Activated CD4-positive, alpha-beta memory T cell treated with anti-CD3 and anti-CD28 coated beads for 36 hours (primary cell): ENCODE measurements at regions of chr9 and their contacts with region 1.

Region 1: GRCh38 chr9:72364679-72365524 is at the start of gene ZFAND5:
- DNase-seq: peak; percentile 95
- H3K4me3 Mint-ChIP-seq: peak within 1 kb of the TSS; percentile 84
- H3K27ac Mint-ChIP-seq: peak within 1 kb of the TSS; percentile 96
- H3K4me1 Mint-ChIP-seq: peaks cover 35% of the 10 kb centered on the region
- H3K27me3 Mint-ChIP-seq: no peaks in the 10 kb centered on the region
- total RNA-seq, gene ZFAND5: 92.4 to 93.8 TPM

Region 2: GRCh38 chr9:71783120-71783530 is 581.8 kb before region 1 on chr9:
- CTCF ChIA-PET with region 1: no interaction called
- POLR2A ChIA-PET with region 1: interaction called, 3 read pairs
- intact Hi-C with region 1: loop called (anchors 5 kb)
- DNase-seq: peak; percentile 94
- H3K4me3 Mint-ChIP-seq: peak overlapping the region; percentile 71
- H3K27ac Mint-ChIP-seq: peak overlapping the region; percentile 96
- H3K4me1 Mint-ChIP-seq: peaks cover 43% of the 10 kb centered on the region
- H3K27me3 Mint-ChIP-seq: no peaks in the 10 kb centered on the region

Region 3: GRCh38 chr9:72089451-72090130 is 275.3 kb before region 1 on chr9:
- CTCF ChIA-PET with region 1: no interaction called
- POLR2A ChIA-PET with region 1: no interaction called
- intact Hi-C with region 1: no loop called
- DNase-seq: no peak
- H3K4me3 Mint-ChIP-seq: no peak overlapping the region
- H3K27ac Mint-ChIP-seq: no peak overlapping the region
- H3K4me1 Mint-ChIP-seq: no peaks in the 10 kb centered on the region
- H3K27me3 Mint-ChIP-seq: peaks cover 5% of the 10 kb centered on the region

Region 4: DNA sequence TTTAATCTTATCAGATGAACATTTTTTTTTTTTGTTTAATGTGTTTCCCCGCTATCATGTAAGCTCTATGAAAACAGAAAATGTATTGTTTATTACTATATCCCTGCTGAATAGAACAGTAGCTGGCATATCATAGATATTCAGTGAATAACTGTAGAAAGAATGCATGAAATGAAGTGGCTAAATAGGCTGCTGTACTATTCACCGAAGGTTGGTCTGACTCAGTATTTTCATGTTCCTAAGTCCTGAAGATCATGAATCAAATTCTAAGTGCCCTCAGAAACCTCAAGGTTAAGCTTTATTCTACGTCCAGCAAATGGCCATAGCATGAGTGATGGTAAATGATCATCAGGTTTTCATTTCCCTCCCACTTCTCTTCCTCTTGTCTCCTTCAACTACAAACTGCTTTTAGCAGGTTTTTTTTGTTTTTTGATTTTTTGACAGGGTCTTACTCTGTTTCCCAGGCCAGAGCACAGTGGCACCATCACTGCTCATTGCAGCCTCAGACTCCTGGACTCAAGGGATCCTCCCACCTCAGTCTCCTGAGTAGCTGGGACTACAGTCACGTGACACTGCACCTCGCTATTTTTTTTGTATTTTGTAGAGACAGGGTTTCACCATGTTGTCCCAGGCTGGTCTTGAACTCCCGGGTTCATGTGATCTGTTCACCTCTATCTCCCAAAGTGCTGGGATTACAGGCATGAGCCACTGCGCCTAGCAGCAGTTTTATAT is 19.2 kb after region 1 on chr9:
- CTCF ChIA-PET with region 1: interaction called, 4 read pairs
- POLR2A ChIA-PET with region 1: interaction called, 7 read pairs
- intact Hi-C with region 1: loop called (anchors 2 kb)
- DNase-seq: no peak
- H3K4me3 Mint-ChIP-seq: no peak overlapping the region
- H3K27ac Mint-ChIP-seq: no peak overlapping the region
- H3K4me1 Mint-ChIP-seq: peaks cover 7% of the 10 kb centered on the region
- H3K27me3 Mint-ChIP-seq: no peaks in the 10 kb centered on the region

Region 5: GRCh38 chr9:72473474-72474261 is 108.8 kb after region 1 on chr9:
- CTCF ChIA-PET with region 1: no interaction called
- POLR2A ChIA-PET with region 1: no interaction called
- intact Hi-C with region 1: loop called (anchors 1 kb)
- DNase-seq: no peak
- H3K4me3 Mint-ChIP-seq: no peak overlapping the region
- H3K27ac Mint-ChIP-seq: peak overlapping the region; percentile 79
- H3K4me1 Mint-ChIP-seq: peaks cover 41% of the 10 kb centered on the region
- H3K27me3 Mint-ChIP-seq: no peaks in the 10 kb centered on the region

Region 6: DNA sequence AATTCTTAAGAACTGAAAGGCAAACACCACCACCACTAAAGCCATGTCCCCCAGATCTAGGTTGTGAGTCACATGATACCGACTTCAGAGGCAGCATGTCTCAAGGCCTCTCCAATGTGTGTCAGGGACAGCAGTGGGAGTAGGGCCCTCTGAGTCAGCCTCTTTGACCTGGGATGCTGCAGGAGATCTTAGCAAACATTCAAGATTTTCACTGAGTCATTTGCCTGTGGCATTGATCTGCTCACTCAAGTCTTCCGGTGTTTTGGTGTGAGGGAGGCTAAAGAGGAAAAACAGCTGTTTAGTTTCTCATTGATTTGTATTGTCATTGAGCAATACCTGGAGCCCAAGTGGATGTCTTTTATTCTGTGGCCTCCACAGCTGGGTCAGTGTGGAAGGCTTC is 192.6 kb after region 1 on chr9:
- CTCF ChIA-PET with region 1: no interaction called
- POLR2A ChIA-PET with region 1: no interaction called
- intact Hi-C with region 1: loop called (anchors 1 kb)
- DNase-seq: peak; percentile 79
- H3K4me3 Mint-ChIP-seq: no peak overlapping the region
- H3K27ac Mint-ChIP-seq: peak overlapping the region; percentile 60
- H3K4me1 Mint-ChIP-seq: peaks cover 16% of the 10 kb centered on the region
- H3K27me3 Mint-ChIP-seq: no peaks in the 10 kb centered on the region

Region 7: GRCh38 chr9:72763022-72763421 is 398.1 kb after region 1 on chr9:
- CTCF ChIA-PET with region 1: no interaction called
- POLR2A ChIA-PET with region 1: no interaction called
- intact Hi-C with region 1: no loop called
- DNase-seq: no peak
- H3K4me3 Mint-ChIP-seq: no peak overlapping the region
- H3K27ac Mint-ChIP-seq: no peak overlapping the region
- H3K4me1 Mint-ChIP-seq: no peaks in the 10 kb centered on the region
- H3K27me3 Mint-ChIP-seq: peaks cover 11% of the 10 kb centered on the region

Region 8: DNA sequence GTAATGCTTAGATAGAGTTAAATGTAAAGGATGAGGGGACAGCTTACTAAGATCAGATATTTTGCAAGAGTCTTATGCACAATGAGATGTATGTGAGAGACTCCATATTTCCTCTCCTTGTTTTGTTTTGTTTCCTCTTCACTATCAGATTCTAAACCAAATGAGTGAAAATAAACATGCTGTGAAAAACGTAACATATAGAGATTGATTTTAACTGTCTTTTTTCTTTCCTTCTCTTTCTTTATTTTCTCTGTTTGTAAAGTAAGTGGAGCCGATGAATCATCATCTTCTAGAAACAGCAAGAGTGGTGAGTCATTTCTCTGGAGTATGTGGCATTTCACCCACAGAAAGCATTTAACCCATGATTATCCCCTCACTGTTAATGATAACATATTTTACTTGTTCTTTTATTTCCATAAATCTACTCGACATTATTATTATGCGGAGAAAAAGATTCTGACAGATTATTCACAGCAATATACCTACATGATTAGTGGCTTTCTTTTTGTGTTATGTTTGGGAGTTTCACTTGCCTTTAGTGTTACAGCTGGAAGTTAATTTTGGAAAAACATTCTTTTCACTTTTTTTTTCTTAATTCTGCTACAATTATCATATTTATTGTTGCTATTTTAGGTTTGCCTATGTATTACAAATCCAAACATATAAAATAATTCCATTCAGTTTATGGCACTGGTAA is 784.6 kb after region 1 on chr9:
- CTCF ChIA-PET with region 1: no interaction called
- POLR2A ChIA-PET with region 1: no interaction called
- intact Hi-C with region 1: loop called (anchors 5 kb)
- DNase-seq: no peak
- H3K4me3 Mint-ChIP-seq: peak overlapping the region; percentile 55
- H3K27ac Mint-ChIP-seq: peak overlapping the region; percentile 86
- H3K4me1 Mint-ChIP-seq: peaks cover 66% of the 10 kb centered on the region
- H3K27me3 Mint-ChIP-seq: no peaks in the 10 kb centered on the region